IMR-90 (cell line): ENCODE measurements at regions of chr11 and their contacts with region 1.

Region 1: DNA sequence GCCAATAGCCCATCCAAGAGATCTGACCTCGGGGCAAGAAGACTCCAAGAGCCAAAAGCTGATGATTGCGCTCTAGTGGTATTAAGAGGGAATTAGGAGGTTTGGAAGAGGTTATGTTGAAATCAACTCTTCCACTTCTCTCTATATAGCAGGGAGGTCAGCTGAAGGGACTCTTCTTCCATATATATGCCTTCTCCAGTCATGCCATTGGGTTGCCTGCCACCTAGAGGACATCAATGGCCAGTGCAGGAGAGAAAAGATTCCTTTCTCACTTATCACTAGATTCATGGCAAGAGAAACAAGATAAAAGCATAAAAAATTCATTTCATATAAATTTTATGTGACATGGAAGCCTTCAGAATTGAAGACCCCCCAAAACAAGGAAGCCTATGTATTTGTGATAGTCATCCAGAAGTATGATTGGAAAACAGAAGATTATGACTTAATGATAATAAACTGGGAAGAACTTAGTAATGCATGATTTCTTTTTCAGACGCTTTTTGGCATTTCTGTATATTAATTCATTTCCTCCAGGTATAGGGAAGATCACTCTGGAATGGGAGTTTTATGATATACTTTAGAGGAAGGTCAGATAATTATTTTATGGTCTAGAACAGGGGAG is 435.1 kb upstream of the DDI1 start:
- DNase-seq: peak; percentile 74
- ATAC-seq: peak; percentile 100
- H3K4me3 ChIP-seq: no peak overlapping the region
- H3K27ac ChIP-seq: no peak overlapping the region
- H3K4me1 ChIP-seq: no peaks in the 10 kb centered on the region
- H3K27me3 ChIP-seq: no peaks in the 10 kb centered on the region
- CTCF ChIP-seq: peak; percentile 92
- POLR2A ChIP-seq: 0 out of 2 replicates have a peak, but pooled peaks have one; percentile 35
- RAD21 ChIP-seq: peak; percentile 95

Region 2: DNA sequence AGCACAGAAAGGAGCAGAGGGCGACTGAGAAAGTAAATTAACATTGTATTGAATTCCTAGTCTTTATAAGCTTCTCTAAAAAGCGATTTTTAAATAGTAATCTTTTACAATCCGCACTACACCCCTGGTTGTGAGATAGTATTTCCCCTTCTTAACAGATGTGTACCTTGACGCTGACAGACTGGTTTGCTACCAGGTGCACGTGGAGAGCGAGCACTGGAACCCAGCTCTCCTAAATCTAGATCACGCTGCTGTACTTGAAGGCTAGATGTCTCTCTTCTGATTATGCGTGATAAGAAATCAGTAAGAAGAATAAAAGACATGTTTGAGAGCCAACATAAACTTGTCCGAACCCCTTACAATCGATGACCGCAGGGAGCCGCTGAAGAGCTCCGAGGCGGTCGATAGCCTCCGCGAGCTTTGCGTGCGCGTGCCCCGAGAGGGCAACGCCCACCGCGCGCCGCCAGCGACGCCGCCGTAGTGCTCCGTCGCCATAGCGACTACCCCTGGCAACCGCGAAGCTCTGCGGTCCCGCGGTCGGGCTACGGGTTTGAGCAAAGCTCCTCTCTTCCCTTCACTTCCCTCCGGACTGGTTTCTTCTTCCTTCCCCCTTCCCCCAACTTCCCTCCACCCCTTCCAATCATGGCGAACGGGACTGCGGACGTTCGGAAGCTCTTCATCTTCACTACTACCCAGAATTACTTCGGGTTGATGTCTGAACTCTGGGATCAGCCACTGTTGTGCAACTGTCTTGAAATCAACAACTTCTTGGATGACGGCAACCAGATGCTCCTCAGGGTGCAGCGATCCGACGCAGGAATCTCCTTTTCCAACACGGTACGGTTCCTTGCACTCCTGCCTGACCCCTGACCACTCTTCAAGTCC is 492.2 kb before region 1 on chr11 and contains the start of gene DYNC2H1:
- CTCF ChIA-PET with region 1: interaction called, 3 read pairs
- POLR2A ChIA-PET with region 1: no interaction called
- dilution Hi-C with region 1: no loop called
- in situ Hi-C with region 1: no loop called
- intact Hi-C with region 1: loop called (anchors 5 kb)
- DNase-seq: peak; percentile 91
- ATAC-seq: peak; percentile 94
- H3K4me3 ChIP-seq: peak within 1 kb of the TSS; percentile 71
- H3K27ac ChIP-seq: peak within 1 kb of the TSS; percentile 79
- H3K4me1 ChIP-seq: no peaks in the 10 kb centered on the region
- H3K27me3 ChIP-seq: peaks cover 4% of the 10 kb centered on the region; the same call in 1 of the 2 replicates
- CTCF ChIP-seq: peak; percentile 59
- POLR2A ChIP-seq: no peak
- RAD21 ChIP-seq: peak; percentile 22; the same call in 1 of the 2 replicates
- total RNA-seq, gene DYNC2H1: 21.0 and 25.3 TPM in 2 replicates

Region 3: GRCh38 chr11:103202048-103202651 is 399.2 kb before region 1 on chr11:
- CTCF ChIA-PET with region 1: interaction called, 3 read pairs
- POLR2A ChIA-PET with region 1: no interaction called
- dilution Hi-C with region 1: no loop called
- in situ Hi-C with region 1: no loop called
- intact Hi-C with region 1: loop called (anchors 1 kb)
- DNase-seq: peak; percentile 63
- ATAC-seq: peak; percentile 60
- H3K4me3 ChIP-seq: no peak overlapping the region
- H3K27ac ChIP-seq: no peak overlapping the region
- H3K4me1 ChIP-seq: peaks cover 2% of the 10 kb centered on the region; the same call in 1 of the 2 replicates
- H3K27me3 ChIP-seq: no peaks in the 10 kb centered on the region
- CTCF ChIP-seq: peak; percentile 79
- POLR2A ChIP-seq: no peak
- RAD21 ChIP-seq: peak; percentile 74

Region 4: DNA sequence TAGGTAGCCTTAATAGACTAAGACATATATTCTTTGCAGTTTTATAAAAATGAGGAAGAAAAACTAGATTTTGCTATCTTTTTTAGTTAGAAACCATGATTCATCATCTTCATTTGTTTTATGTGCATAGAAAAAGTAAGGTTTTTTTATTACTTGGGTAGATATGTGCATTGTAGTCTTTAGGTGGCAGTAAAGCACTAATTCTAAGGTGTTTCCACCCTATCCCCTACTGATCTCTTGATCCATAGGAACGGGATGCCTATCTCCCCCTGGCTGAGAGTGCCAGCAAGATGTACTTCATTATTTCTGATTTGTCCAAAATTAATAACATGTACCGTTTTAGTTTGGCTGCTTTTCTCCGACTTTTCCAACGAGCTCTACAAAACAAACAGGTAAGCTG is 344.0 kb before region 1 on chr11:
- CTCF ChIA-PET with region 1: no interaction called
- POLR2A ChIA-PET with region 1: no interaction called
- dilution Hi-C with region 1: no loop called
- in situ Hi-C with region 1: no loop called
- intact Hi-C with region 1: loop called (anchors 1 kb)
- DNase-seq: peak; percentile 49
- ATAC-seq: peak; percentile 78
- H3K4me3 ChIP-seq: no peak overlapping the region
- H3K27ac ChIP-seq: no peak overlapping the region
- H3K4me1 ChIP-seq: no peaks in the 10 kb centered on the region
- H3K27me3 ChIP-seq: no peaks in the 10 kb centered on the region
- CTCF ChIP-seq: peak; percentile 50
- POLR2A ChIP-seq: no peak
- RAD21 ChIP-seq: peak; percentile 58

Region 5: DNA sequence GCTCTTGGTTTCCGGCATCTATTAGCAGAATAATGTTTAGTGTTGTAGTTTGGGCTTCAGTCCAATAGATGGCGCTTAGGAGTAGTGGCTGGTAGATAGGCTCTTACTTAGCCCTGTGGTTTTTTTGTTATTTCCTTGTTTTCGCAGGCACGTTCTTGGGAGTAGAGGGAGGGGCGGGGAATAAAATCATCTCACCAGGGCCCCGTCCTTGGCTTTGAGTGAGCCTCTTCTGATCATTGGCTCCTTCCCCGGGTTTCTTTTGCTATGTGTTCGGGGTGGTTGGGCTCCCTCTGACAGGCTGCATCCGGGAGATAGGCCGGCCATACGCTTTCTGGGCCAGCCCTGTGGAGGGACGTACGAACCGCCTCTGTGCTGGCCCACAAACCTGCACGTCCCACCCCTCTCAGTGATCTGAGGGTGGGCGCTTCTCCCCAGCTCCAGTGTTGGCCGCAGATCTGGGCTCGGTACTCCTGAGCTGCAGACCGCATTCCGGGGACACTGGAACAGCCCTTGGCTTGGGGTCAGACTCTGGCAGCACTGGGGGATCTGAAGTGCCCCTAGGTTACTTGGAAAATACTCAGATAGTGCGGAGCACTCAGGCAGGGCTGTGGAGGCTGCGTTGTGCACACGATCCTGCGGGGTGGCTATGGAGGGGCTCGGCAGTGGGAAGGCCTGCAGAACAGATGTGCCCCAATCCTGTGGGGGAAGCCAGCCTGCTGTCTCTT is 275.1 kb before region 1 on chr11:
- CTCF ChIA-PET with region 1: interaction called, 6 read pairs
- POLR2A ChIA-PET with region 1: no interaction called
- dilution Hi-C with region 1: no loop called
- in situ Hi-C with region 1: no loop called
- intact Hi-C with region 1: loop called (anchors 1 kb)
- DNase-seq: peak; percentile 78
- ATAC-seq: peak; percentile 98
- H3K4me3 ChIP-seq: no peak overlapping the region
- H3K27ac ChIP-seq: peak overlapping the region; percentile 34
- H3K4me1 ChIP-seq: peaks cover 4% of the 10 kb centered on the region
- H3K27me3 ChIP-seq: no peaks in the 10 kb centered on the region
- CTCF ChIP-seq: peak; percentile 91
- POLR2A ChIP-seq: no peak
- RAD21 ChIP-seq: peak; percentile 89

Region 6: GRCh38 chr11:103338621-103339484 is 262.5 kb before region 1 on chr11:
- CTCF ChIA-PET with region 1: no interaction called
- POLR2A ChIA-PET with region 1: no interaction called
- dilution Hi-C with region 1: no loop called
- in situ Hi-C with region 1: loop called (anchors 5 kb)
- intact Hi-C with region 1: loop called (anchors 1 kb)
- DNase-seq: peak; percentile 66
- ATAC-seq: peak; percentile 40
- H3K4me3 ChIP-seq: no peak overlapping the region
- H3K27ac ChIP-seq: no peak overlapping the region
- H3K4me1 ChIP-seq: no peaks in the 10 kb centered on the region
- H3K27me3 ChIP-seq: no peaks in the 10 kb centered on the region
- CTCF ChIP-seq: peak; percentile 35; the same call in 1 of the 2 replicates
- POLR2A ChIP-seq: no peak
- RAD21 ChIP-seq: peak; percentile 55

Region 7: DNA sequence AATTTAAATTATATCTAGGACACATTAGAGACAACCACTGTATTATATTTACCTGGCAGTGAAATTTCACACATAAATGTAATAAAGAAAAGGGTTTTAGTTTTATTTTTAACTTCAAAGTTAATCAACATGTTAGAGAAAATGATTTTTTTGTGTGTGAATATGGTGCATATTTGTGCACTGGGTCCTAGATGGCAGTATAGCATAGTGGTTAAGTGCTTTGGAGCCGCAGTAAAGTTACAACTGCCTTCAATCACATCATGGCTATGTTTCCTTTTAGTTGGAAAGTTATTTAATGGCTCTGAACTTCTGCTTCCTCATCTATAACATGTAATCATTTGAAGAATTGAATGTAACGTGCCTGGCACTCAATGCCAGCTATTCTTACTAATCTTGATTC is 326.2 kb after region 1 on chr11:
- CTCF ChIA-PET with region 1: no interaction called
- POLR2A ChIA-PET with region 1: no interaction called
- dilution Hi-C with region 1: no loop called
- in situ Hi-C with region 1: no loop called
- intact Hi-C with region 1: loop called (anchors 10 kb)
- DNase-seq: peak; percentile 58
- ATAC-seq: peak; percentile 64
- H3K4me3 ChIP-seq: no peak overlapping the region
- H3K27ac ChIP-seq: no peak overlapping the region
- H3K4me1 ChIP-seq: peaks cover 7% of the 10 kb centered on the region
- H3K27me3 ChIP-seq: no peaks in the 10 kb centered on the region
- CTCF ChIP-seq: peak; percentile 62
- POLR2A ChIP-seq: no peak
- RAD21 ChIP-seq: peak; percentile 73